ENCODE measurements at regions of chr10 and their contacts with region 1.

Region 1: DNA sequence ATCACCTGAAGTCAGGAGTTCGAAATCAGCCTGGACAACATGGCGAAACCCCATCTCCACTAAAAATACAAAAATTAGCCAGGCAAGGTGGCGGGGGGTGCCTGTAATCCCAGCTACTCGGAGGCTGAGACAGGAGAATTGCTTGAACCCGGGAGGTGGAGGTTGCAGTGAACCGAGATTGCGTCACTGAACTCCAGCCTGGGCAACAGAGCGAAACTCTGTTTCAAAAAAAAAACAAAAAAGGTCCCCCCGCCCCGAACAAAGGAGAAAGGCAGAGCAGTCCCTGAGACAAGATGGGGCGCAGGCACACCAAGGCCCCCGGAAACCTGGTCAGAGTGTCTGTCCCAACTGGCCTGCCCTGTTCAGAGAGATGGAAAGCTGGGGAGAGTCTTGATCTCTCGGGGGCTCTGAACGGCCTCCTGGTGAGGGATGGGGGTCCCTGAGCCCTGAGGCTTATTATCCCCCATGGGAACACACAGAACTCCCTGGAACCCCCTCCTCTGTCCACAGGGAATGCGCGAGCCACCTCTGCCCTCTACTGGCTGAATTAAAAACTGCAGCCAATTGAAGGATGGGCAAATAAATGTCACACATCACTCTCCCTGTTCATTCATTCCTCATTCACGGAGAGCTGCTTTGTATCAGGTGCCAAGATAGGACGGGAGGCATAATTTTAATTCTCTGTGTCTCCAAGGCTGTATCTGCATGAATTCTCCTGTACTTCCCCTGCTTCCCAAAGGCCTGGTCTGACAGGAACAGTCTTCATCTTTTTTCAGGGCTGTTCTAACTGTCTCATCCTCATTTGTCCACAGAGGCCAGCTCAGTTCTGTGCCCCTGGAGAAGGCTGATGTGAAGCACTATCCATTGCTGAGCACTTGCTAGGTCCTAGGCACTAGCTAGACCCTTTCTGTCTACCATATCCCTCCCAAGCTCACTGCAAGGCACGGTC is 28.9 kb downstream of the MAT1A start:
- DNase-seq: peak; percentile 74
- H3K4me3 ChIP-seq: peak overlapping the region in 1 of 2 experiments; percentile 39; a peak in 1 of 4 replicates
- H3K27ac ChIP-seq: no peak overlapping the region
- H3K4me1 ChIP-seq: no peaks in the 10 kb centered on the region
- H3K27me3 ChIP-seq: no peaks in the 10 kb centered on the region; the same call in 1 of the 2 replicates
- CTCF ChIP-seq: peak; percentile 88
- EP300 ChIP-seq: no peak
- RAD21 ChIP-seq: peak; percentile 68

Region 2: GRCh38 chr10:79310911-79311573 is 949.5 kb before region 1 on chr10:
- CTCF ChIA-PET with region 1: no interaction called
- POLR2A ChIA-PET with region 1: no interaction called
- DNase-seq: peak; percentile 42
- H3K4me3 ChIP-seq: no peak overlapping the region
- H3K27ac ChIP-seq: peak overlapping the region in 1 of 2 experiments; percentile 44; a peak in 1 of 4 replicates
- H3K4me1 ChIP-seq: peaks cover 0 to 57% of the 10 kb centered on the region in 2 experiments; a peak in 1 of 4 replicates
- H3K27me3 ChIP-seq: no peaks in the 10 kb centered on the region
- CTCF ChIP-seq: no peak
- EP300 ChIP-seq: no peak
- RAD21 ChIP-seq: no peak

Region 3: GRCh38 chr10:80272793-80273517 is 12.4 kb after region 1 on chr10:
- CTCF ChIA-PET with region 1: interaction called, 16 read pairs
- POLR2A ChIA-PET with region 1: no interaction called
- DNase-seq: no peak
- H3K4me3 ChIP-seq: no peak overlapping the region
- H3K27ac ChIP-seq: no peak overlapping the region
- H3K4me1 ChIP-seq: no peaks in the 10 kb centered on the region; a peak in 1 of 4 replicates
- H3K27me3 ChIP-seq: no peaks in the 10 kb centered on the region
- CTCF ChIP-seq: no peak
- EP300 ChIP-seq: no peak
- RAD21 ChIP-seq: no peak

Region 4: DNA sequence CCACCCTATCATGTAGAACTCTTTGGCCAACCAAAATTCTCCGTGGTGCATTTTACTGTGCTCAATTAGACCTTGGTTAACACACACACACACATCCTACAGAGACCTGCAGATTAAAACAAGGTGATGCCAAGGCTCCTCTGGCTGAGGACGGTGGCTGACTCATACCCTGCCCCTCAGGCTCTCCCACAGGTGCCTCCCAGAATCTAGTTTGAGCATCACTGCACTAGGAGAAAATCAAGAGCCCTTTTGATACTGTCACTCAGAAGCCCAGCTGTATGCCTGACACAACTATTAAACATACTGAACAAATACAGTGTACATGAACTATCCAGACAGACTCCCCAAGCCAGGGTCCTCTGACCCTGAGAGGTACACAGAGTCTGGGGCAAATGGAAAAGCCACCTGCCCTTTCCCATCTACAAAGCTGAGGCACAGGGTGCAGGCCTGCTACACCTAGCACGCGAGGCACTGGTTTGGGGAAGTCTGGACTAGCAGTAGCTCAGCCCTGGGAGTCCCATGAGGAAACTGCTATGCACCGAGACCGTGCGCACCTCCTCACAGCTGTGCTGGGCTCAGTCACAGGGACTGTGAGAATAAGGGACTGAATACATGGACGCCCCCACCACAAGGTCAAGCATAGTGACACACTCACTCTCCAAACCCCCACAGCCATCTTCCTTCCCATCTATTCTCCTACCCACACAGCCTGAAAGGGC is 20.6 kb after region 1 on chr10:
- CTCF ChIA-PET with region 1: interaction called, 10 read pairs
- POLR2A ChIA-PET with region 1: no interaction called
- DNase-seq: no peak
- H3K4me3 ChIP-seq: no peak overlapping the region
- H3K27ac ChIP-seq: no peak overlapping the region
- H3K4me1 ChIP-seq: no peaks in the 10 kb centered on the region
- H3K27me3 ChIP-seq: no peaks in the 10 kb centered on the region; the same call in 1 of the 2 replicates
- CTCF ChIP-seq: no peak
- EP300 ChIP-seq: no peak
- RAD21 ChIP-seq: no peak

Region 5: GRCh38 chr10:80392276-80392675 is 131.7 kb after region 1 on chr10:
- CTCF ChIA-PET with region 1: no interaction called
- POLR2A ChIA-PET with region 1: no interaction called
- DNase-seq: no peak
- H3K4me3 ChIP-seq: no peak overlapping the region
- H3K27ac ChIP-seq: no peak overlapping the region
- H3K4me1 ChIP-seq: peaks cover 0 to 2% of the 10 kb centered on the region in 2 experiments; a peak in 1 of 4 replicates
- H3K27me3 ChIP-seq: no peaks in the 10 kb centered on the region
- CTCF ChIP-seq: no peak
- EP300 ChIP-seq: no peak
- RAD21 ChIP-seq: no peak

Region 6: GRCh38 chr10:80596391-80597257 is 336.1 kb after region 1 on chr10:
- CTCF ChIA-PET with region 1: no interaction called
- POLR2A ChIA-PET with region 1: no interaction called
- DNase-seq: peak; percentile 58
- H3K4me3 ChIP-seq: peak overlapping the region in 1 of 2 experiments; percentile 32; a peak in 1 of 4 replicates
- H3K27ac ChIP-seq: no peak overlapping the region
- H3K4me1 ChIP-seq: peaks cover 0 to 5% of the 10 kb centered on the region in 2 experiments; a peak in 2 of 4 replicates
- H3K27me3 ChIP-seq: no peaks in the 10 kb centered on the region
- CTCF ChIP-seq: peak; percentile 66
- EP300 ChIP-seq: no peak
- RAD21 ChIP-seq: peak; percentile 49